ENCODE measurements at regions of chr12 and their contacts with region 1.

Region 1: GRCh38 chr12:26853303-26854030 is 20.5 kb upstream of the ITPR2 start:
- DNase-seq: no peak
- H3K4me3 ChIP-seq: no peak overlapping the region
- H3K27ac ChIP-seq: no peak overlapping the region
- H3K4me1 ChIP-seq: peaks cover 0 to 19% (median 3%) of the 10 kb centered on the region in 3 donors
- H3K27me3 ChIP-seq: no peaks in the 10 kb centered on the region
- CTCF ChIP-seq: peak; percentile 78 to 93 (median 85)
- POLR2A ChIP-seq: no peak

Region 2: GRCh38 chr12:26434299-26435068 is 419.0 kb before region 1 on chr12:
- intact Hi-C with region 1: no loop called
- DNase-seq: no peak
- H3K4me3 ChIP-seq: no peak overlapping the region
- H3K27ac ChIP-seq: no peak overlapping the region
- H3K4me1 ChIP-seq: no peaks in the 10 kb centered on the region
- H3K27me3 ChIP-seq: no peaks in the 10 kb centered on the region
- CTCF ChIP-seq: peak in 5 of 6 experiments; percentile 49 to 90 (median 73)
- POLR2A ChIP-seq: no peak

Region 3: GRCh38 chr12:26884765-26885576 is 31.5 kb after region 1 on chr12:
- intact Hi-C with region 1: loop called (anchors 5 kb)
- DNase-seq: peak; percentile 15
- H3K4me3 ChIP-seq: peak overlapping the region in 1 of 4 donors; percentile 24
- H3K27ac ChIP-seq: peak overlapping the region in 1 of 4 donors; percentile 66
- H3K4me1 ChIP-seq: peaks cover 4 to 11% (median 4%) of the 10 kb centered on the region in 3 donors
- H3K27me3 ChIP-seq: no peaks in the 10 kb centered on the region
- CTCF ChIP-seq: peak; percentile 87 to 97 (median 96)
- POLR2A ChIP-seq: no peak

Region 4: DNA sequence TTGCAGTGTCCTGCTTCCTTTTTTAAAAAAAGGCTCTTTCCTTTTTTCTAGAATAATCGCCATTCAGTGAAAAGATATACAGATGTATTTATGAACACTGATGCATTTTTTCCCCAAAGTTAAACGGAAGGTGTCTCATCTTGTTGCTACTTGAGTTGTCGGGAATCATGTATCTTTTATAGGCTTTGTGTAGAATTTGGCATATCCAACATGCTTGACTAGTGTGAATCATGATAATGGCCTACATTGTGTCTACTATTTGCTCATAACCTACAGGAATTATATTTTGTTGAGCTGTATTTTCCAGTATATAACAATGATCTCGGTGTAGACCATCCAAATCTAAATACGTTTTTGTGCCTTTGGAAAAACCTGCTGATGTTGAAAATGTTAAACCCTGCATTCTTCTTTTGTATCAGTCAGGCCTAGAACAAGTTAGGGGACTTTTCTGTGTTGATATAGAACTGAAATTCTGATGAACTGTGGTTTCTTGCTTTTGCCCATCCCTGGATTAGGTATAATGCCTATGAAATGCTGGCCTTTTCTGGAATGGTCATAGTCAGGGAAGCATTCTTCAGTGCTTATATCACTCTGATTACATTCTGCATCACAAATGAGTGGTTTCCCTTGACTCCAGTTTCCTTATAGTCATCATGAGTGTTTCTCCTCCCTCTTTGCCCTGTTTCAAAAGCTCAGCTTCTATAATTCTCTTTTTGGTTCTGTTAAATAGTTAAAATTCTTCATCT is 490.0 kb after region 1 on chr12:
- intact Hi-C with region 1: no loop called
- DNase-seq: no peak
- H3K4me3 ChIP-seq: no peak overlapping the region
- H3K27ac ChIP-seq: peak overlapping the region; percentile 65 to 83 (median 76)
- H3K4me1 ChIP-seq: peaks cover 4 to 75% (median 19%) of the 10 kb centered on the region in 3 donors
- H3K27me3 ChIP-seq: no peaks in the 10 kb centered on the region
- CTCF ChIP-seq: no peak
- POLR2A ChIP-seq: no peak